ENCODE measurements at regions of chr2 and their contacts with region 1.

Region 1: GRCh38 chr2:178914259-178914849 is 107.1 kb upstream of the TTN start:
- DNase-seq: peak; percentile 32 to 67 (median 59)
- ATAC-seq: peak; percentile 90
- H3K4me3 ChIP-seq: no peak overlapping the region
- H3K4me3 Mint-ChIP-seq: no peak overlapping the region
- H3K27ac ChIP-seq: no peak overlapping the region
- H3K27ac Mint-ChIP-seq: no peak overlapping the region
- H3K4me1 ChIP-seq: no peaks in the 10 kb centered on the region
- H3K4me1 Mint-ChIP-seq: peaks cover 0 to 17% (median 4%) of the 10 kb centered on the region in 7 donors
- H3K27me3 ChIP-seq: no peaks in the 10 kb centered on the region
- H3K27me3 Mint-ChIP-seq: no peaks in the 10 kb centered on the region

Region 2: DNA sequence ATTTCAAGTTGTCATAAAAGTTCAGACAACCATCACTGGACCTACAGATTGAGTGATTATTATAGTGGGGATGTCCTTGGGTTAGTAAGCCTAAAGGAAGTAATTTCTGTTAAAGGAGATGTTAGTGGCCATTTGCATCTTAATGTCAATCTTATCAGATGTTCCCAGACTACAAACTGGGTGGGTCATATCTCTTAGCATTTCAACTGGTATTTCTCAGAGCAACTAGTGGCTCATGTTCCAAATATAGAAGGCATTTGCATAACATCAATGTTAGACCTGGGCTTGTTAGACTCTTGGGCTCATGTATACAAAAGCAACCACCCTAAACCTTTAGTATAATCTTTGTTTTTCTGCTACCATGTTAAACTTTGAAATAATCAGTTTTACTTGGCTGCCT is 416.2 kb before region 1 on chr2:
- CTCF ChIA-PET with region 1: no interaction called
- POLR2A ChIA-PET with region 1: no interaction called
- intact Hi-C with region 1: no loop called
- DNase-seq: no peak
- ATAC-seq: no peak
- H3K4me3 ChIP-seq: no peak overlapping the region
- H3K4me3 Mint-ChIP-seq: no peak overlapping the region
- H3K27ac ChIP-seq: no peak overlapping the region
- H3K27ac Mint-ChIP-seq: no peak overlapping the region
- H3K4me1 ChIP-seq: no peaks in the 10 kb centered on the region
- H3K4me1 Mint-ChIP-seq: peaks cover 0 to 12% (median 0%) of the 10 kb centered on the region in 7 donors
- H3K27me3 ChIP-seq: no peaks in the 10 kb centered on the region
- H3K27me3 Mint-ChIP-seq: no peaks in the 10 kb centered on the region

Region 3: GRCh38 chr2:178761759-178762371 is 152.5 kb before region 1 on chr2:
- CTCF ChIA-PET with region 1: interaction called, 4 read pairs
- POLR2A ChIA-PET with region 1: no interaction called
- intact Hi-C with region 1: loop called (anchors 1 kb)
- DNase-seq: peak in 6 of 9 donors; percentile 13 to 47 (median 38)
- ATAC-seq: peak; percentile 52
- H3K4me3 ChIP-seq: no peak overlapping the region
- H3K4me3 Mint-ChIP-seq: no peak overlapping the region
- H3K27ac ChIP-seq: no peak overlapping the region
- H3K27ac Mint-ChIP-seq: no peak overlapping the region
- H3K4me1 ChIP-seq: no peaks in the 10 kb centered on the region
- H3K4me1 Mint-ChIP-seq: peaks cover 0 to 2% (median 0%) of the 10 kb centered on the region in 7 donors
- H3K27me3 ChIP-seq: no peaks in the 10 kb centered on the region
- H3K27me3 Mint-ChIP-seq: no peaks in the 10 kb centered on the region

Region 4: GRCh38 chr2:179082697-179083096 is 168.3 kb after region 1 on chr2:
- CTCF ChIA-PET with region 1: no interaction called
- POLR2A ChIA-PET with region 1: no interaction called
- intact Hi-C with region 1: no loop called
- DNase-seq: no peak
- ATAC-seq: no peak
- H3K4me3 ChIP-seq: no peak overlapping the region
- H3K4me3 Mint-ChIP-seq: no peak overlapping the region
- H3K27ac ChIP-seq: no peak overlapping the region
- H3K27ac Mint-ChIP-seq: no peak overlapping the region
- H3K4me1 ChIP-seq: no peaks in the 10 kb centered on the region
- H3K4me1 Mint-ChIP-seq: peaks cover 0 to 2% (median 0%) of the 10 kb centered on the region in 7 donors
- H3K27me3 ChIP-seq: no peaks in the 10 kb centered on the region
- H3K27me3 Mint-ChIP-seq: peaks cover 0 to 3% (median 0%) of the 10 kb centered on the region in 5 donors

Measured in naive thymus-derived CD4-positive, alpha-beta T cell (primary cell).